ENCODE measurements at regions of chr17 and their contacts with region 1.

Region 1: GRCh38 chr17:41738077-41738735 is 3.8 kb upstream of the HAP1 start:
- H3K4me3 ChIP-seq: no peak overlapping the region
- H3K27ac ChIP-seq: peak overlapping the region; percentile 11; the same call in 1 of the 2 replicates
- H3K4me1 ChIP-seq: peaks cover 2% of the 10 kb centered on the region; the same call in 1 of the 2 replicates
- CTCF ChIP-seq: peak; percentile 96

Region 2: GRCh38 chr17:41786227-41787020 is 48.2 kb after region 1 on chr17 and contains the start of gene JUP:
- CTCF ChIA-PET with region 1: interaction called, 21 read pairs
- POLR2A ChIA-PET with region 1: interaction called, 14 read pairs
- H3K4me3 ChIP-seq: peak within 1 kb of the TSS; percentile 61
- H3K27ac ChIP-seq: peak within 1 kb of the TSS; percentile 53; the same call in 1 of the 2 replicates
- H3K4me1 ChIP-seq: peaks cover 12% of the 10 kb centered on the region
- CTCF ChIP-seq: peak; percentile 40

Region 3: DNA sequence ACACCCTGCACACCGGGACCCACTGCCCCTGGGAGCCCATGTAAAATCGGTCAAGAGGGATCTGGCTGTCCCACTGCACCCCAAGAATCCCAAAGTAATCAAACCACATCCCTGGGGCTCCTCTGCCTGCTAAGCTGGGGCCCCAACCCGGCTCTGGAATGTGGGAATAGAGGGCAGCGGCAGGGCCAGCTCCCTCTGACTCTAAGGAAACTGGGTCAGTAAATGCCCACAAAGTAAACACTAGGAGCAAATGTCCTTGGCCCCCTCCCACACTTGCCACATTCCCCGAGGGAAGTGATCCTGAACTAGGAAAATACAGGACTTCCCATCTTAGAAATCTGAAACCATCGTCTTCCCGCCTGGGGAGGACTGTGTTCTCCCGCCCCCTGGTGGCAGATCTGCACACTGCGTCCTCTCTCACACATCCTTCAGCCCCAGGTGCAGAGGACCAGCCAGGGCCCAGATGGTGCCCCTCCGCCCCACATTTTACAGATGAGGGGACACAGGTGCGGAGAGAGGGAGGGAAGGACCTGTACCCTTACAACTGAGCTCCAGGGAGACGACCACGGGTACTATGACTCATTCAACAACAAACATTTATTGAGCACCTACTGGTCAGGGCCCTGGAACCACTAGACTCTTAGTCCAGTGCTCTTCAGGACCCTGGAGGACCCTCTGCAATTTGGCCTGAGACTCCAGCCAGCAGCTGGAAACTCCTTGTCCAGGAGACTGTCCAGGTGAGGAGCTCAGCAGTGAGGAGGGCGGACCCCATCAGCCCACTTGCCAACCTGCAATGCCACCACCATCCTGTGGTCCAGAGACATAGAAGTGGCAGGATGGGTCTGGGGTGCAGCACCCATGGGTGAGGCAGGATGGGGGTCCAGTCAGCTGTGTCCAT is 63.4 kb after region 1 on chr17:
- CTCF ChIA-PET with region 1: interaction called, 51 read pairs
- POLR2A ChIA-PET with region 1: interaction called, 17 read pairs
- H3K4me3 ChIP-seq: peak overlapping the region; percentile 10; the same call in 1 of the 2 replicates
- H3K27ac ChIP-seq: no peak overlapping the region; the same call in 1 of the 2 replicates
- H3K4me1 ChIP-seq: peaks cover 6% of the 10 kb centered on the region
- CTCF ChIP-seq: peak; percentile 93

Region 4: DNA sequence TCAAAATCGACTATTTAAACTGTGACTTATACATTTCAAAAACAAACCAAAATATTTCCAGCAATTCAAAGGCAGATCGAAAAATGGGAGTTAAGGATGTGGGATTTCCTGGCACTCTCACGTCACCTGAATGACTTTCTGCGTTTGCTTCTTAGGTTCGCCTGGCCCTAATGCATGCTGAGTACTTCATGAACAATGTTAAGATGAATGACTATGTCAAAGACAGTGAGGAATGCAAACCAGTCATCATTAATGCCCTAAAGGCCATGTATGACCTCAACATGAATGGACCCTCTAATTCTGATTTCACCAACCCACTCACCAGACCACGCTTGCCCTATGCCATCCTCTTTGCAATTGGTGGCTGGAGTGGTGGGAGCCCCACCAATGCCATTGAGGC is 106.8 kb after region 1 on chr17:
- CTCF ChIA-PET with region 1: interaction called, 4 read pairs
- POLR2A ChIA-PET with region 1: interaction called, 11 read pairs
- H3K4me3 ChIP-seq: no peak overlapping the region
- H3K27ac ChIP-seq: no peak overlapping the region
- H3K4me1 ChIP-seq: peaks cover 19% of the 10 kb centered on the region
- CTCF ChIP-seq: no peak

Region 5: GRCh38 chr17:41959336-41960095 is 221.3 kb after region 1 on chr17:
- CTCF ChIA-PET with region 1: interaction called, 21 read pairs
- POLR2A ChIA-PET with region 1: interaction called, 6 read pairs
- H3K4me3 ChIP-seq: no peak overlapping the region
- H3K27ac ChIP-seq: 0 out of 2 replicates have a peak overlapping the region, but pooled peaks have one; percentile 4
- H3K4me1 ChIP-seq: peaks cover 4% of the 10 kb centered on the region; the same call in 1 of the 2 replicates
- CTCF ChIP-seq: peak; percentile 65